ENCODE measurements at regions of chr4 and their contacts with region 1.

Region 1: GRCh38 chr4:75916091-75916661 is 13.9 kb upstream of the PPEF2 start:
- DNase-seq: peak; percentile 25
- ATAC-seq: peak; percentile 88
- H3K4me3 ChIP-seq: no peak overlapping the region
- H3K27ac ChIP-seq: peak overlapping the region; percentile 8
- H3K4me1 ChIP-seq: peaks cover 5% of the 10 kb centered on the region
- H3K27me3 ChIP-seq: no peaks in the 10 kb centered on the region
- CTCF ChIP-seq: peak; percentile 72
- EP300 ChIP-seq: no peak
- POLR2A ChIP-seq: no peak
- RAD21 ChIP-seq: peak; percentile 24; the same call in 1 of the 2 replicates

Region 2: DNA sequence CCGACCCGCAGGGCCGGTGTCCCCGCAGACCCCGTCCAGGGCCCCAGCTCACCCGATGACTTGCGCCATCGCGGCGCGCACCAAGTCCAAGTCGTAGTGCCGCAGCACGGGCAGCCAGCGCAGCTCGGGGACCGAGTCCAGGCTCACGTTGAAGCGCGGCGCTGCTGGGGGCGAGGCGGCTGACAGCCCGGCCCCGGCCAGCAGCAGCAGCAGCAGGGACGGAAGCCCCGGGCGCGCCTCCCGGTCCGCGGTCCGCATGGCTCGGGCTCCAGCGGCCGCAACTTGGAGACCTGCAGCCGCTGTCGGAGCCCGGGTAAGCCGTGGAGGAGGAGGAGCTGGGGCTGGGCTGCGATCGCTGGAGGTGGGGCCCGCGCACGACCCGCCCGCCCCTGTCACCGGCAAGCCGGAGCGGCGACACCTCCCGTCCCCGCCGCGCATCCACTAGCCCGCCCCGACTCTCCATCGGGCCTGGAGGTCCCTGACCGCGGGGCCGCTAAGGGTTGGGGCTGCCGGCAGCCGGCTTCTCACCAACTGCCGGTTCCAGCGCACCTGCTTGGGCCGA is 24.6 kb after region 1 on chr4 and contains the start of gene NAAA:
- CTCF ChIA-PET with region 1: interaction called, 14 read pairs
- POLR2A ChIA-PET with region 1: interaction called, 5 read pairs
- in situ Hi-C with region 1: no loop called
- intact Hi-C with region 1: loop called (anchors 1 kb)
- DNase-seq: peak; percentile 62
- ATAC-seq: peak; percentile 90
- H3K4me3 ChIP-seq: peak within 1 kb of the TSS; percentile 64 to 89 (median 67)
- H3K27ac ChIP-seq: peak within 1 kb of the TSS; percentile 82
- H3K4me1 ChIP-seq: peaks cover 20% of the 10 kb centered on the region
- H3K27me3 ChIP-seq: no peaks in the 10 kb centered on the region
- CTCF ChIP-seq: peak; percentile 74
- EP300 ChIP-seq: no peak
- POLR2A ChIP-seq: peak in 1 of 2 experiments; percentile 72; a peak in 3 of 4 replicates
- RAD21 ChIP-seq: peak; percentile 15
- total RNA-seq, gene NAAA: 11.7 and 24.6 TPM in 2 replicates

Region 3: DNA sequence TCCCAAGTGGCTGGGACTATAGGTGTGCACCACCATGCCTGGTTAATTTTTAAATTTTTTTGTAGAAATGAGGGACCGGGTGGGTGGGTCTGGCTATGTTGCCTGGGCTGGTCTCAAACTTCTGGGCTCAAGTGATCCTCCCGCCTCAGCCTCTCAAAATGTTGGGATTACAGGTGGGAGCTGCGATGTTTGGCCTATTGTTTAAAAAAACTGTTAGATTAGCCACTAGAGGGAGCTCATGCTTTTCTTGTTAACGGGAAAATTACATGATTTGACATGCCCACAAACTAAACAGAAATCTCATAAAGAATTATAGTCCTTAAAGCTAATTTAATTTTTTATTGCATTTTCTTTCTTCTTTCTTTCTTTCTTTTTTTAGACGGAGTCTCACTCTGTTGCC is 79.6 kb after region 1 on chr4:
- CTCF ChIA-PET with region 1: no interaction called
- POLR2A ChIA-PET with region 1: no interaction called
- in situ Hi-C with region 1: no loop called
- intact Hi-C with region 1: loop called (anchors 5 kb)
- DNase-seq: peak; percentile 49
- ATAC-seq: peak; percentile 19; the same call in 2 of the 3 replicates
- H3K4me3 ChIP-seq: no peak overlapping the region
- H3K27ac ChIP-seq: no peak overlapping the region
- H3K4me1 ChIP-seq: peaks cover 5% of the 10 kb centered on the region; the same call in 1 of the 2 replicates
- H3K27me3 ChIP-seq: no peaks in the 10 kb centered on the region
- CTCF ChIP-seq: peak; percentile 61
- EP300 ChIP-seq: no peak
- POLR2A ChIP-seq: no peak
- RAD21 ChIP-seq: no peak

Region 4: GRCh38 chr4:76067652-76068286 is 151.6 kb after region 1 on chr4:
- CTCF ChIA-PET with region 1: interaction called, 6 read pairs
- POLR2A ChIA-PET with region 1: no interaction called
- in situ Hi-C with region 1: no loop called
- intact Hi-C with region 1: loop called (anchors 1 kb)
- DNase-seq: peak; percentile 60
- ATAC-seq: peak; percentile 92
- H3K4me3 ChIP-seq: no peak overlapping the region
- H3K27ac ChIP-seq: no peak overlapping the region
- H3K4me1 ChIP-seq: no peaks in the 10 kb centered on the region
- H3K27me3 ChIP-seq: no peaks in the 10 kb centered on the region
- CTCF ChIP-seq: peak; percentile 80
- EP300 ChIP-seq: no peak
- POLR2A ChIP-seq: no peak
- RAD21 ChIP-seq: peak; percentile 66

Region 5: GRCh38 chr4:76087007-76087769 is 171.0 kb after region 1 on chr4:
- CTCF ChIA-PET with region 1: no interaction called
- POLR2A ChIA-PET with region 1: no interaction called
- in situ Hi-C with region 1: no loop called
- intact Hi-C with region 1: loop called (anchors 5 kb)
- DNase-seq: peak; percentile 86
- ATAC-seq: peak; percentile 99
- H3K4me3 ChIP-seq: 0 out of 6 replicates have a peak overlapping the region, but pooled peaks of 1 of the 3 experiments have one; percentile 9
- H3K27ac ChIP-seq: no peak overlapping the region
- H3K4me1 ChIP-seq: peaks cover 13% of the 10 kb centered on the region
- H3K27me3 ChIP-seq: no peaks in the 10 kb centered on the region
- CTCF ChIP-seq: peak; percentile 81
- EP300 ChIP-seq: no peak
- POLR2A ChIP-seq: no peak
- RAD21 ChIP-seq: peak; percentile 62

Measured in HepG2 (cell line).